H1 (cell line): ENCODE measurements at regions of chr3 and their contacts with region 1.

Region 1: GRCh38 chr3:908839-909238 is 184.0 kb upstream of the CNTN6 start:
- DNase-seq: no peak
- H3K4me3 ChIP-seq: no peak overlapping the region
- H3K27ac ChIP-seq: no peak overlapping the region
- H3K4me1 ChIP-seq: 0 out of 7 replicates have a peak, but pooled peaks cover 0 to 2% (median 0%) of the 10 kb centered on the region in 4 experiments
- H3K27me3 ChIP-seq: peaks cover 0 to 11% (median 6%) of the 10 kb centered on the region in 4 experiments; a peak in 4 of 7 replicates
- CTCF ChIP-seq: peak; percentile 49 to 82 (median 73)
- EP300 ChIP-seq: no peak
- POLR2A ChIP-seq: no peak
- RAD21 ChIP-seq: peak; percentile 91 to 96

Region 2: DNA sequence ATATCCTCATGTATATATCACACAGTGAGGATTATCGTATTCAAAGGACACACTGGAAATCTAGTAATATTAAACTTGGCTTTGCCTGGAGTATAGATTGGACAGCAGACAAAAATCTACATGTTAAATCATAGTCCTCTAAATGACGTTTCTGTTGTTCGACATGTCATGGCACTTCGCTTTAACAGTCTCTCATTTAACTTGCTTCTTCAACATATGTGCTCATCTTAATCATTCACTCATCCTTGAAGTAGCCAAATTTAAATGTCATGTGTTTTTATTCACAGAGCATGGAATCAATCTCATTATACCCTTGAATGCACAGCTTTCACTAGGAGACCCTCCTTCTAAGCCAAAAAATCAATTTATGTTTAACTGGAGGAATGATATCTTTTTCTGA is 233.0 kb before region 1 on chr3:
- CTCF ChIA-PET with region 1: no interaction called
- POLR2A ChIA-PET with region 1: no interaction called
- DNase-seq: no peak
- H3K4me3 ChIP-seq: no peak overlapping the region
- H3K27ac ChIP-seq: no peak overlapping the region
- H3K4me1 ChIP-seq: no peaks in the 10 kb centered on the region
- H3K27me3 ChIP-seq: no peaks in the 10 kb centered on the region
- CTCF ChIP-seq: no peak
- EP300 ChIP-seq: no peak
- POLR2A ChIP-seq: no peak
- RAD21 ChIP-seq: no peak

Region 3: DNA sequence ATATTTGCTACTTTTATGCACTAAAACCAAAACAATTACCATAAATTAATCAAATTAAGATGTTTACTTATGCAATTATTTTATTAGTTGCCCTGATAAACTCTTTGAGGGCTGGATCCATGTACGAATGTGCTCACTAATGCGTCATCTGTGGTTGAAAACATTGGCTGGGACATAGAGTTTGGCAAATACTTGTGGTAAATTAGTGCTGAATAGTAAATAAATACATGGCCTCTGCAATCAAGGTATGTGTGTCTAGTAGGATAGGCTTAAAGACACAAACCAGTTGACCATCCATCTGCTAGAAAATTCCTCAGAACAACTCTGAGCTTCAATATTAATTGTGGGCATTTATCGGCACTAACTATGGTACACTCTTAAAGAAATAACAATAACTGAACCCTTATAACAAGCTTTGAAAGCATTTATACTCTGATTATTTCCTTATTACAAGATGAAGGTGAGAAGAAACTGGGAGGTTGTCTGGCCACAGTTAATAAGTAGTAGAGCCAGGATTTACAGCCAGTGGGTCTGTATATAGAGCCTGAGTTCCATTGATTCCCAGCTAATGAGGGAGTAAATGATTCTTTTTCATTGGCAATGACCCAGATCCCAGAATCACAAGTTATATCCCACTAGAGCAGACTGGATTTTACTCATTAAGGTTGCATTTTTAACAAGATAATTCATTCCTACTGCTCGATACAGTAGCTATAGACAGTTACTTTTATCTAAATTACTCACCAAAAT is 14.5 kb after region 1 on chr3:
- CTCF ChIA-PET with region 1: interaction called, 10 read pairs
- POLR2A ChIA-PET with region 1: no interaction called
- DNase-seq: no peak
- H3K4me3 ChIP-seq: no peak overlapping the region
- H3K27ac ChIP-seq: no peak overlapping the region
- H3K4me1 ChIP-seq: no peaks in the 10 kb centered on the region
- H3K27me3 ChIP-seq: no peaks in the 10 kb centered on the region
- CTCF ChIP-seq: no peak
- EP300 ChIP-seq: no peak
- POLR2A ChIP-seq: no peak
- RAD21 ChIP-seq: no peak